H1 (cell line): ENCODE measurements at regions of chr2 and their contacts with region 1.

Region 1: DNA sequence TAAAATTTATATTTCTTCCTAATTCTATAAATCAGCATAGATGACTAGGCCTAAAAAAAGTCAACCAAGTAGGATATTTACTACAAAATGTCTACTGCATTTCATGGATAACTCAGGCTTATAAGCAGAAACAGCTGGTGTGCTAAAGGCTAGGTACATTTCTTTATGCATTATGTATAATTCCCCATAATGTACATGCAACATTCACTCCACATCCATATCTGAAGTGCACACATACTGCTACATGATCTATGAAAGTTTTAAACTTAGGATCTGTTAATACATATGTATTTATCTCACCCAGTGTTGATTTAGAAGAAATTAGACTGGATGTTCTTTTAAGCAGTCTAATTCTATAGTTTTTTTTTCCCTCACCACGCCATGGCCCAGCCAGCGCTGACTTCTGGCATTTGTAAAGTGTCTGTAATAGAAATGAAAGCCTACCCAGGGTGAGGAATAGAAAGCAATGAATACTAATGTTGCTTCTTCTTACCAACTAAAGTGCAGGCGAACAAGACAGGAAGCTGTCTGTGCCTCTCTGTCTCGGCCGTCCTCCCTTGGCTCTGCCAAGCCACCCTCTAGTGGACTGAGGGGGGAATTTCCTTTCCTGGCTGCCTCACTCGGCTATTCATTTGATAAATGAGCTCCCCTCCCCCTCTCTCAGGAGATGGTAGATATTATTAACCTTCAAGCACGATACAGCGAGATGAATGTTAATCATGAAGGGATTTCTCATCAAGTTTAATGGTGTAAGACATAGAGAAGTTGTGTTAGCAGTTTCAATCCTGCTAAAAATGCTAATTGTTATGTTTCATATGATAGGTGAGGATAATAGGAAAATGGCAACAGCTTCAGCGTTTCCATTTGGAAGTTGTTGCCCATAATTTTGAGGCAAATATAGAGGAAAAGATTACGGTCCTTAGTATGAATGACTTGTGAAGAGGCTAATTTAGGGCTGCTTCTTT is 384.5 kb downstream of the MTX2 start:
- DNase-seq: peak in 1 of 2 experiments; percentile 49
- H3K4me3 ChIP-seq: no peak overlapping the region
- H3K27ac ChIP-seq: no peak overlapping the region
- H3K4me1 ChIP-seq: no peaks in the 10 kb centered on the region; a peak in 1 of 7 replicates
- H3K27me3 ChIP-seq: no peaks in the 10 kb centered on the region; a peak in 1 of 7 replicates
- CTCF ChIP-seq: peak; percentile 81 to 89 (median 81)
- EP300 ChIP-seq: no peak
- POLR2A ChIP-seq: no peak
- RAD21 ChIP-seq: peak; percentile 55 to 71

Region 2: GRCh38 chr2:176454893-176455811 is 198.6 kb before region 1 on chr2:
- CTCF ChIA-PET with region 1: interaction called, 15 read pairs
- POLR2A ChIA-PET with region 1: interaction called, 3 read pairs
- DNase-seq: peak; percentile 67 to 98
- H3K4me3 ChIP-seq: no peak overlapping the region
- H3K27ac ChIP-seq: no peak overlapping the region
- H3K4me1 ChIP-seq: peaks cover 0 to 14% (median 7%) of the 10 kb centered on the region in 4 experiments; a peak in 5 of 7 replicates
- H3K27me3 ChIP-seq: no peaks in the 10 kb centered on the region
- CTCF ChIP-seq: peak; percentile 57 to 82 (median 79)
- EP300 ChIP-seq: no peak
- POLR2A ChIP-seq: no peak
- RAD21 ChIP-seq: peak; percentile 91 to 94

Region 3: GRCh38 chr2:176622792-176623191 is 31.0 kb before region 1 on chr2:
- CTCF ChIA-PET with region 1: interaction called, 10 read pairs
- POLR2A ChIA-PET with region 1: no interaction called
- DNase-seq: no peak
- H3K4me3 ChIP-seq: no peak overlapping the region
- H3K27ac ChIP-seq: no peak overlapping the region
- H3K4me1 ChIP-seq: no peaks in the 10 kb centered on the region
- H3K27me3 ChIP-seq: no peaks in the 10 kb centered on the region
- CTCF ChIP-seq: no peak
- EP300 ChIP-seq: no peak
- POLR2A ChIP-seq: no peak
- RAD21 ChIP-seq: no peak

Region 4: DNA sequence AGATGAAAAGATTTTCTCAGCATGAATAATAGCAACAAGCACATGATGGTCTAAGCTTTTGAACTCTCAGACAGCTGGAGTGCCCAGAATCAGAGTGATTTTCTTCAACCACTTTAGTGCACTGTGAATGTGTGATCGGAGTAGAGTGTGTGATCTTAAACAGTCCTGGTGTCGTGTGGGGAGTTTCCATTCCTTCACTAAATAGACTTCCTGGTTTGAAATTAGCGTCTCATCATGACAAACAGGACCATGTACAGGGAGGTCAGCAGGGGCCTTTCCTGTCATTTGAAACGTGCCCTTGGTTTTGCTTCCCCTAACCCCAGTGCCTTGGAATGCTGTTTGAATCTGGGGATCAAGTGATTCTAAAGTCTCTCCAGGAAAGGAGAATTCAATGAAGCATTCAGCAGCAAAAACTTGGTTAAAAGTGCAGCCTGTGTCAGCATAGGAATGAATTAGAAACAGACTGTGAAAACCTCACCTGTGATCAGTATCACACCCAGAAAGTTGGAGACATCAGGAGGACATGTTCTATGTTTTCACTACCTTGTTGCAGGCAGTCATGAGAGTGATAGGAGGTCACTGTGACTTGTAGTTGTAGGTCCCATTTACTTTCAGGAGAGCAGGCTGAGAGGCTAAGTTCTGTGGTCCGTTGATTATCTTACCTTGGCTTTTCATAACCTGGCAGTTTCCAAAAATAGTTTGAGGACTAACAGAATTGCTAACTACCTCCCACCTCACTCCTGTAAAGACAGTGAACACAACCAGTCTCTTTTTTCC is 15.8 kb after region 1 on chr2:
- CTCF ChIA-PET with region 1: interaction called, 123 read pairs
- POLR2A ChIA-PET with region 1: no interaction called
- DNase-seq: no peak
- H3K4me3 ChIP-seq: no peak overlapping the region
- H3K27ac ChIP-seq: no peak overlapping the region
- H3K4me1 ChIP-seq: peaks cover 0 to 5% (median 2%) of the 10 kb centered on the region in 4 experiments; a peak in 1 of 7 replicates
- H3K27me3 ChIP-seq: peaks cover 0 to 4% (median 2%) of the 10 kb centered on the region in 4 experiments; a peak in 4 of 7 replicates
- CTCF ChIP-seq: no peak
- EP300 ChIP-seq: no peak
- POLR2A ChIP-seq: no peak
- RAD21 ChIP-seq: no peak

Region 5: DNA sequence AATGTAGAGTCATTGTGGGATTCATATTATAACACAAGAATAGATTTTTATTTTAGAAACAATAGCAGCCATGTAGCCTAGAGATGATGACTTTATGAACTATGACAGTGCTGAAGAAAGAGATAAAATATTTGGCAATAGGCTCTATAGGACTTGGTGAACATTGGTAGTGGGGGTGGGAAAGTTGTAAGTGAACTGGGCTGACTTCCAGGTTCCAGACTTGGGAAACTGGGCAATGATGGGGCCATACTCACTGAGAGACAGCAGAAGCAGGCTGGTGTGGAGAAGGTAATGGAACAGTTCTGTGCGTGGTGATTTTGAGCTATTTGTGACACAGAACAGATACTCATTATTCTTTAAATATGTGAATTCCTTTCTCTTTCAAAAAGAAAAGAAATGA is 88.5 kb after region 1 on chr2:
- CTCF ChIA-PET with region 1: interaction called, 17 read pairs
- POLR2A ChIA-PET with region 1: no interaction called
- DNase-seq: no peak
- H3K4me3 ChIP-seq: no peak overlapping the region
- H3K27ac ChIP-seq: no peak overlapping the region
- H3K4me1 ChIP-seq: peaks cover 3 to 24% (median 11%) of the 10 kb centered on the region in 4 experiments; a peak in 6 of 7 replicates
- H3K27me3 ChIP-seq: no peaks in the 10 kb centered on the region
- CTCF ChIP-seq: no peak
- EP300 ChIP-seq: no peak
- POLR2A ChIP-seq: no peak
- RAD21 ChIP-seq: no peak

Region 6: GRCh38 chr2:176830362-176830761 is 176.6 kb after region 1 on chr2:
- CTCF ChIA-PET with region 1: interaction called, 12 read pairs
- POLR2A ChIA-PET with region 1: no interaction called
- DNase-seq: no peak
- H3K4me3 ChIP-seq: no peak overlapping the region
- H3K27ac ChIP-seq: no peak overlapping the region
- H3K4me1 ChIP-seq: no peaks in the 10 kb centered on the region
- H3K27me3 ChIP-seq: no peaks in the 10 kb centered on the region
- CTCF ChIP-seq: peak; percentile 38 to 53 (median 40)
- EP300 ChIP-seq: no peak
- POLR2A ChIP-seq: no peak
- RAD21 ChIP-seq: peak; percentile 34 to 54